Activated CD8-positive, alpha-beta T cell treated with anti-CD3 and anti-CD28 coated beads, Interleukin-2, amount 10 ng/mL, durations not matched to agents 7 days and 5 days (primary cell): ENCODE measurements at regions of chr3 and their contacts with region 1.

Region 1: DNA sequence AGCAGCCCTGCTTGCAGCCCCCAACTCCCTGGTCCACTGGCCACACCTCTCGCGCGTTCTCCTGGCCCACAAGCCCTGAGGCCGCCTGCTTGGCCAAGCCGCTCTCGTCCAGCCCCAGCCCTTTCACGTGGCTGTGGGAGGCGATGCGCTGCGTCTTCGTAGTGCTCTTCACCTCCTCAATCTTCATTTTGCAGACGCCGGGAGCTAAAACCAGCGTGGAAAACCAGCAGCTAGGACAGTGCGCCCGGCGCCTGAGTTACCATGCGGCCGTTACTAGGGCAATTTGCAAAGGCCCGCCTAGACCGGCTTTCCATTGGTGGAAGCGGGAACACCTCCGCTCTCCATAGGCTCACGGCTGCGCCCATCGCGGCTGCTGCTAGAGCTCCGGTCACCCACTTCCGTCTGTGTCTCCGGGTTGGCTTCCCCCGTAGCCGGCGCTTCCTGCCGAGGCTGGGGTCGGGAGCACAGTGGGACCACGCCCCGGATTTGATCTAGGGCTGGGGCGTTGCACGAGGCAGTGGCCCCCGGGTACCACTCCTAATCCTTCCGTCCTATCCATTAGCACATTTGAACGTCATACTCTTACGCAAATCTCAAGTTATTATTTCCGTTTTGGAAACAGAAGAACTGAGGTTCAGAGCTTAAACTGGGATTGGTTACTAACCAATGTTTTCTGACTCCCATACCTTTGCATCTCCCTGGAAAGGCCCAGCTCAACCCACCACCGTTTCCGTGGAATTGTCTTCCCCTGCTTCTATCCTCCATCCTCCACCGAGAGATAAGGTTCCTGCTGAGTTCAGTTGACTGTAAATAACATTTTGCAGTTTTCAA is at the start of gene RUVBL1:
- DNase-seq: peak; percentile 99
- ATAC-seq: peak; percentile 99
- H3K4me3 Mint-ChIP-seq: peak within 1 kb of the TSS; percentile 98
- H3K27ac Mint-ChIP-seq: peak within 1 kb of the TSS; percentile 94
- H3K4me1 Mint-ChIP-seq: peaks cover 22% of the 10 kb centered on the region
- H3K27me3 Mint-ChIP-seq: no peaks in the 10 kb centered on the region
- total RNA-seq, gene RUVBL1: 57.3 to 57.4 TPM

Region 2: GRCh38 chr3:128041344-128041743 is 82.4 kb before region 1 on chr3:
- CTCF ChIA-PET with region 1: no interaction called
- POLR2A ChIA-PET with region 1: no interaction called
- DNase-seq: no peak
- ATAC-seq: no peak
- H3K4me3 Mint-ChIP-seq: no peak overlapping the region
- H3K27ac Mint-ChIP-seq: no peak overlapping the region
- H3K4me1 Mint-ChIP-seq: no peaks in the 10 kb centered on the region
- H3K27me3 Mint-ChIP-seq: peaks cover 20% of the 10 kb centered on the region

Region 3: DNA sequence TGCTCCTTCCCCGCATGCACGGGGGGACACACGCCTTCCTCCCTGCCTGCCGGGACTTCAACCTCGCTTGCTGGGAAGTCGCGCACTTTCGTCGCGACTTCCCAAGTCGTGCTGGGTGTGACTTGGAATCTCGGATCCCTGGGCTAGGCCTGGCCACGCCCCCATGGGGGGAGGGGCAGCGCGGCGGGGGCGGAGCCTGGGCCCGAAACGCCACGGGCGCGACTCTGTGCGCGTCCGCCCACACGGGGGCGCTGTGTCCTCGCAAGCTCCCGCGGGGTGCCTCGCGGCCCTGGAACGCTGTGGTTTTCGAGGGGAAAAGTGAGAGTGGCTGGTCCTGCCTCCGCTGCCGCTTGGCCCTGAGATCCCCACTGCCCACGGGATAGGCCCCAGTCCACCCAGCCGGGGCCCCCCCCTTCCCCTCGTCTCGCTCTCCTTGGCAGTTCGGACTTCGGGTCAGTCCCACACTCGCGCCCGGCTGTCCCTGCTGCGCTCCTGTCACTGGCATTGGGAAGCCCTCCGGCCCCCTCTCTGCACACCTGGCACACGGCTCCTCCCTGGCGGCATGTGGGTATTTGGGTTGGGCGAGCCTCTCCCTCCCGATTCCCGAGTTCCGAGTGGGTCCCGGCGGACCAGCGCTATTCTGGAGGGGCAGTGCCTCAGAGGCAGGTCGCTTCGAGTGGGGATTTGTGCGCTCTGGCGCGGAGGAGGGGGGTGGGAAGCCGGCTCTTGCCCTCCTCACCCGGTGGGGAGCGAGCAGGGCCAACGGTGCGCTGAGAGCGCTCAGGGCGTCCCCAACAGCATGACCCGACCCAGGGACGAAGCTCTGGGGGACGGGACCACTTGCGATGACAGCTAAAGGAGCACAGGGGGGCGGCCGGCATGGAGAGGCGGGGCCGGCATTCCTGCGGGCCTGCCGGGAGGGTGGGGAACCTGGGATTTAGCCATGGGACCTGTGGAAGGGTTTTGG is 48.0 kb before region 1 on chr3:
- CTCF ChIA-PET with region 1: interaction called, 13 read pairs
- POLR2A ChIA-PET with region 1: no interaction called
- DNase-seq: peak; percentile 84
- ATAC-seq: peak; percentile 82
- H3K4me3 Mint-ChIP-seq: peak overlapping the region; percentile 40
- H3K27ac Mint-ChIP-seq: no peak overlapping the region
- H3K4me1 Mint-ChIP-seq: peaks cover 19% of the 10 kb centered on the region
- H3K27me3 Mint-ChIP-seq: no peaks in the 10 kb centered on the region

Region 4: DNA sequence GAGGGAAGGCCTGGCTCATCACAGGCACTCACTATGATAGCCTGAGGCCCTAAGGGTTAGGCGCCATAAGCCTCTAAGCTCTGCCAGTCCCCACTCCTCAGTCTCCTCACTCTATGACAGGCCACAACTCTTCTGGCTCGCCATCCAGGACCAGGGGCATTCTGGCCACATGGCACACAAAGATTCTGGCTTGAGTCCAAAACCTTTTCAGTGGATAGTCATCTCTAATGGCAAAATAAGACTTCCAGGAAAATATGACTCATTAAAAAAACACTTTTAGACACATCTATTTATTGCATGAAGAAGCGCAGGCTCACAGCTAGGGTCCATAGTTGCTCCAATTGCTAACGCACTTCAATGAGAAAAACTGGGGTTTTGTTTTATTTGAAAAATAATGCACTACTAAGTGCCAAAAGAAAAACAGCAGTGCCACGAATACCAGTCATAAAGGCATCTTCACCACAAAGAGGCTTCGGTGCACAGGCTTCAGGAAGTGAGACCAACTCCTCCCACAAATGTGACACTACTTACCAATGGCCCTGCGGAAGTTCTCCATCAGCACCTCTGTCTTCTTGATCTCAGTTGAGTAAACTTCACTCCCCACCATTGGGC is 11.3 kb before region 1 on chr3:
- CTCF ChIA-PET with region 1: interaction called, 8 read pairs
- POLR2A ChIA-PET with region 1: interaction called, 13 read pairs
- DNase-seq: peak; percentile 73
- ATAC-seq: peak; percentile 88
- H3K4me3 Mint-ChIP-seq: peak overlapping the region; percentile 43
- H3K27ac Mint-ChIP-seq: peak overlapping the region; percentile 98
- H3K4me1 Mint-ChIP-seq: peaks cover 49% of the 10 kb centered on the region
- H3K27me3 Mint-ChIP-seq: no peaks in the 10 kb centered on the region

Region 5: GRCh38 chr3:128153156-128154041 is 29.6 kb after region 1 on chr3 and contains the start of gene EEFSEC:
- CTCF ChIA-PET with region 1: interaction called, 7 read pairs
- POLR2A ChIA-PET with region 1: interaction called, 10 read pairs
- DNase-seq: peak; percentile 86
- ATAC-seq: peak; percentile 94
- H3K4me3 Mint-ChIP-seq: peak within 1 kb of the TSS; percentile 91
- H3K27ac Mint-ChIP-seq: peak within 1 kb of the TSS; percentile 93
- H3K4me1 Mint-ChIP-seq: peaks cover 20% of the 10 kb centered on the region
- H3K27me3 Mint-ChIP-seq: no peaks in the 10 kb centered on the region
- total RNA-seq, gene EEFSEC: 21.7 to 23.1 TPM

Region 6: DNA sequence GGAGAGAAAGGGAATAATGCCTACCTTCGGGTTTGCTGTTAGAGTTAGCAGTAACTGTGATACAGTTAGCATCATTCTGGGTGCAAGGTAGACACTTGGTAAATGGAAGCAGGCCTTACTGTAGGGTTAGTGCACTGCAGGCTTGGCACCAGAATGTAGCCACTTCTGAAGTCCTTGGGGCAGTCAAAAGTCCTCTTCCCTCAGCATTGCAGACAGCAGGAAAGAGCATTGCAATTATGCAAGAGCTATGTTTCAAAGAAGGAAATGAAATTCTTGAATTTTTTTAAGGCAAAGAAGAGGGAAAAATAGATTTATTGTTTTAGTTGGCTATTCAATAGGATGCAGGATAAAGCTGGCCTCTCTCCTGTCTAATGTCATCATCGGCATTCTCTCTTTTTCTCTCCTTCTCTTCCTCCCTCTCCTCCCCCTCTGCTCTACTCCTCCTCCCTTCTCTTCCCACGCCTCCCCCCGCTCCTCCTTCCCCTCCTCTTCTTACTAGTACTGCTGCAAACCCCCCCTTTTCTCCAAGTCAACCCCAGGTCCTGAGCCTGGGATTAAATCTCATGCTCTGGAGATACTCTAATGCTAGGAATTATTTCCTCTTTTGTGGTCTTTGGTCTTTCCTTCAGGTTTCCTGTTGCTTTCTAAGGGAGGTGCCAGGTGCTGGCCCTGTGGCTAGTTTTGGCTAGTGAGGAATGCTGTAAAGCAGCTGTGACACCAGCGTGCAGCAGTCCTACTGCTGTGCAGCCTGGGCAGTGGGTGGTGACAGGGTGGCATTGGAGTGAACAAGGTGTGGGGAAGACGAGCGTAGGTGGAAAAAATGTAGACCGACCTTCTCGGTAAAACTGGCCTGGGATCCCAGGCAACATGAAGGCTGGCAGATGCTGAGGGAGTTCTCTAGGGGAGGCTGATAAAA is 51.2 kb after region 1 on chr3:
- CTCF ChIA-PET with region 1: no interaction called
- POLR2A ChIA-PET with region 1: no interaction called
- DNase-seq: no peak
- ATAC-seq: no peak
- H3K4me3 Mint-ChIP-seq: no peak overlapping the region
- H3K27ac Mint-ChIP-seq: no peak overlapping the region
- H3K4me1 Mint-ChIP-seq: peaks cover 17% of the 10 kb centered on the region
- H3K27me3 Mint-ChIP-seq: no peaks in the 10 kb centered on the region